MCF 10A (cell line): ENCODE measurements at regions of chr1 and their contacts with region 1.

Region 1: DNA sequence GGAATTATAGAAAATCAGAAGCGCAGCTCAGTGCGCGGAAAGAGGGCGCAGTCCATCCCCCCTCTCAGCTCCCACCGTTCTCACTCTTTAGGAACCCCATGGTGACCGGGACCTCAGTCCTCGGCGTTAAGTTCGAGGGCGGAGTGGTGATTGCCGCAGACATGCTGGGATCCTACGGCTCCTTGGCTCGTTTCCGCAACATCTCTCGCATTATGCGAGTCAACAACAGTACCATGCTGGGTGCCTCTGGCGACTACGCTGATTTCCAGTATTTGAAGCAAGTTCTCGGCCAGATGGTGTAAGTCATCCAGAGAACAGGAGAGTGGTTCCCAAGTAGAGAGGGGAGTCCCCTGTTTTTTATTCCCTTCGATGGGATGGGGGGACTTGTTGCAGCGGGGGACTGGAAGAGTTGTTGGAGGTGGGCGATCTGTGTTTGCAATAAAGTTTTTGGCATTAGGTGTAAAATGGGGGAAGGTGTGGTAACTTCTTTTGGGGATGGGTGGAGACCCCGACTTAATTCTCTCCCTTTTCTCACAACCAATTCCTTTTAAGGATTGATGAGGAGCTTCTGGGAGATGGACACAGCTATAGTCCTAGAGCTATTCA is 620 bp downstream of the PSMB4 start:
- DNase-seq: peak; percentile 27
- H3K4me3 Mint-ChIP-seq: peak overlapping the region; percentile 93
- H3K27ac Mint-ChIP-seq: peak overlapping the region; percentile 99
- H3K4me1 Mint-ChIP-seq: peaks cover 20% of the 10 kb centered on the region
- H3K27me3 Mint-ChIP-seq: no peaks in the 10 kb centered on the region
- CTCF ChIP-seq: no peak

Region 2: GRCh38 chr1:151198255-151199127 is 201.5 kb before region 1 on chr1 and contains the start of gene PIP5K1A:
- CTCF ChIA-PET with region 1: interaction called, 3 read pairs
- POLR2A ChIA-PET with region 1: interaction called, 6 read pairs
- intact Hi-C with region 1: loop called (anchors 1 kb)
- DNase-seq: peak; percentile 100
- H3K4me3 Mint-ChIP-seq: peak within 1 kb of the TSS; percentile 93
- H3K27ac Mint-ChIP-seq: peak within 1 kb of the TSS; percentile 95
- H3K4me1 Mint-ChIP-seq: peaks cover 40% of the 10 kb centered on the region
- H3K27me3 Mint-ChIP-seq: no peaks in the 10 kb centered on the region
- CTCF ChIP-seq: no peak
- total RNA-seq, gene PIP5K1A: 150 and 163 TPM in 2 replicates

Region 3: GRCh38 chr1:151311589-151312331 is 88.2 kb before region 1 on chr1:
- CTCF ChIA-PET with region 1: interaction called, 7 read pairs
- POLR2A ChIA-PET with region 1: interaction called, 30 read pairs
- intact Hi-C with region 1: loop called (anchors 2 kb)
- DNase-seq: peak; percentile 100
- H3K4me3 Mint-ChIP-seq: no peak overlapping the region
- H3K27ac Mint-ChIP-seq: peak overlapping the region; percentile 95
- H3K4me1 Mint-ChIP-seq: peaks cover 40% of the 10 kb centered on the region
- H3K27me3 Mint-ChIP-seq: no peaks in the 10 kb centered on the region
- CTCF ChIP-seq: no peak

Region 4: DNA sequence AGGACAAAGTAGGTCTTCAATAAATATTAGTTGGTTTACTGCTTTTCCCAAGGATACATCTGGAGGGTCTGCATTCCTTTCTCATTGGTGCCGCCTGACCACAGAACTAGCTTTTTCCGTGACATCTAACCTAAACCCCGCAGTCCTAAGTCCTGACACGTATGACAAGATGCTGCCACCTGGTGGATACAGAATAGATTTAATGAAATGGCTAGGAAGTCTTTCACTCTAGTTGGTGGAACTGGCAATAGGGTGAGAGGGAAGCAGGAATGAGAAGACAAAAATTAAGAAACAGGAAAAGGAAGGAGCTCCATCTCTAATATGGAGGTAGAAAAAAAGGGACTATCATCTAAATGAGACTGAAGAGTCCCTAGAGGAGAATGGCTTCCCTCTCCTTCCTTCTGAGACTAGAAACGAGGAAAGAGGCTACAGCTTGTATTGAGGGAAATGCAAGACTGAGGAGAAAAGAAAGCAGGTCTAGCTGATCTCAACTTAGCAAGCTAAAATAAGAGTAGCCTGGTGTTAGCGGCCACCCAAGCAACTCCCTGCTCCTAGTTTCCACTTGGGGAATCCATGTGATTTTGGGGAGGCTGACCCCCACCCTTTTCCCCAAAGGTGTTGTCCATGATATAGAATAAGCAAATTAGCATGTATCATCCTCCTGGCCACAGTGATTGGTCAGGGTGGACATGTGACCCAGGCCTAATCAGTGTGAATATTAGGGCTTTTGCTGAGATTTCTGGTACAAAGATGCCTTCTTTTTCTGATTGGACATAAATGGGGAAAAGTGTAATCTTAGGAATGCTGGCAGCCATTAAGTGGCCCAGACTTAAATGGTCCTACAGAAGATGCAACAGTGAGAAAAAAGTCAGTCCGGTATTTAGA is 58.9 kb before region 1 on chr1:
- CTCF ChIA-PET with region 1: interaction called, 35 read pairs
- POLR2A ChIA-PET with region 1: interaction called, 28 read pairs
- intact Hi-C with region 1: loop called (anchors 1 kb)
- DNase-seq: peak; percentile 94
- H3K4me3 Mint-ChIP-seq: no peak overlapping the region
- H3K27ac Mint-ChIP-seq: no peak overlapping the region
- H3K4me1 Mint-ChIP-seq: peaks cover 11% of the 10 kb centered on the region
- H3K27me3 Mint-ChIP-seq: no peaks in the 10 kb centered on the region
- CTCF ChIP-seq: peak; percentile 74

Region 5: DNA sequence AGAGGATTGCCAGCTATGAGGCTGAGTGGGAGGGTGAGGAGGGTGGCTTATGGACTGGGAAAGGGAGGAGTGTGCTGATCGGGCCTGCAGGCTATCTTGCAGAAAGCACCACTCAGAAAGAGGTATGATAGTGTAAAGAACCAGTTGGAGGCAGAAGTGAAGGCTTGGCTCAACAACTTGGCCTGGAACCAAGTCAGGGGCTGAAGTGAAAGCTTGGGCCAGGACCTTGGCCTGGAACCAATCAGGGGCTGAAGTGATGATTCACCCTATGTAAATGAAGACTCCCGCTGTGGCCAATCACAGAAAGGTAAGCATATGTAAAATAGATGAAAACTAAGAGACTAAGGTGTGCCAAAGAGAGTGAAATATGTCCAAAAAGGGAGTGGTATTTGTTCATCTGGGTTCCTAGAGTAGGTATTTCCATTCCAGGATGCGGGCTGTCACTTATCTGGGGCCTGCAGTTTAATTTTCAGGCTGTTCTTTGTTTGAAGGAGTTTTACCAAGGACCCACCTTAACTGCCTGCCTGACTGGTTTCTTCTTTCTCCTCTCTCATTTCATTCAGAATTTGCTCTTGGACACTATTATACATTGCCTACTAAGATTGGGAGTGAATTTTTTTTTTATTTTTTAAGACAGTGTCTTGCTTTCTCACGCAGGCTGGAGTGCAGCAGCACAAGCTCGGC is 47.8 kb before region 1 on chr1:
- CTCF ChIA-PET with region 1: interaction called, 4 read pairs
- POLR2A ChIA-PET with region 1: interaction called, 12 read pairs
- intact Hi-C with region 1: loop called (anchors 1 kb)
- DNase-seq: peak; percentile 97
- H3K4me3 Mint-ChIP-seq: no peak overlapping the region
- H3K27ac Mint-ChIP-seq: peak overlapping the region; percentile 8
- H3K4me1 Mint-ChIP-seq: peaks cover 14% of the 10 kb centered on the region
- H3K27me3 Mint-ChIP-seq: no peaks in the 10 kb centered on the region
- CTCF ChIP-seq: no peak

Region 6: GRCh38 chr1:151384584-151384983 is 15.4 kb before region 1 on chr1:
- CTCF ChIA-PET with region 1: interaction called, 5 read pairs
- POLR2A ChIA-PET with region 1: interaction called, 21 read pairs
- intact Hi-C with region 1: no loop called
- DNase-seq: no peak
- H3K4me3 Mint-ChIP-seq: no peak overlapping the region
- H3K27ac Mint-ChIP-seq: no peak overlapping the region
- H3K4me1 Mint-ChIP-seq: no peaks in the 10 kb centered on the region
- H3K27me3 Mint-ChIP-seq: no peaks in the 10 kb centered on the region
- CTCF ChIP-seq: no peak

Region 7: DNA sequence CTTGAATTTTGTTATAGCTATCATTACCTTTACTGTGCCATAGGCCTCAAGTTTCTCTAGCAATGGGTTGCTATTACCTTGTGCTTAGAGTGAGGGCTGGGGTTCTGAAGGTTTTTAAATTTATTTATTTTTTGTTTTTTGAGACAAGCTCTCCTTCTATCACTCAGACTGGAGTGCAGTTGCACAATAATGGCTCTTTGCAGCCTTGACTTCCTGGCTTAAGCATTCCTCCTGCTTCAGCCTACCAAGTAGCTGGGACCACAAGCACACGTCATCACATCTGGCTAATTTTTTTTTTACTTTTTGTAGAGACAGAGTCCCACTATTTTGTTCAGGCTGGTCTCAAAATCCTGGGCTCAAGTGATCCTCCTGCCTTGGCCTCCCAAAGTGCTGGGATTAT is 253.4 kb after region 1 on chr1:
- CTCF ChIA-PET with region 1: no interaction called
- POLR2A ChIA-PET with region 1: no interaction called
- intact Hi-C with region 1: no loop called
- DNase-seq: peak; percentile 62
- H3K4me3 Mint-ChIP-seq: no peak overlapping the region
- H3K27ac Mint-ChIP-seq: no peak overlapping the region
- H3K4me1 Mint-ChIP-seq: peaks cover 12% of the 10 kb centered on the region
- H3K27me3 Mint-ChIP-seq: no peaks in the 10 kb centered on the region
- CTCF ChIP-seq: no peak